Endothelial cell of umbilical vein (primary cell): ENCODE measurements at regions of chr7 and their contacts with region 1.

Region 1: GRCh38 chr7:86975449-86975848 is 84.0 kb downstream of the ELAPOR2 start:
- DNase-seq: no peak
- H3K4me3 ChIP-seq: no peak overlapping the region
- H3K27ac ChIP-seq: no peak overlapping the region
- H3K4me1 ChIP-seq: no peaks in the 10 kb centered on the region
- H3K27me3 ChIP-seq: no peaks in the 10 kb centered on the region
- CTCF ChIP-seq: no peak
- POLR2A ChIP-seq: no peak

Region 2: DNA sequence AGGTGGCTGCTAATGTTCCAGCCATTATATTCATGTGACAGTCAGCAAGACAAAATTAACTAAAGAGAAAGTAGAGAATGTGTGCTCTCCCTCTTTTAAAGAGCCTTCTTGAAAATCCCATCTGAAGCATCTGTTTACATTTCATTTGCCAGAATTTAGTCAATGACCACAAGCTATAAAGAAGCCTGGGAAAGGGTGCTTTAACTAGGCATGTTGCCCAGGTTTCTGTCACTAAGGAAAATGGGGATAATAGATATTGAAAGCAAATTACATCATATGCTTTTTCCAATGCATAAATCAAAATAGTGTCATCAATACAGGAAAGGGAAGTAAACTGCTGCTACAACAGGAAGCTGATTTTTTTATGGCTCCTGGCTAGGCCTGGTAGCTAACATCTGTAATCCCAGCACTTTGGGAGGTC is 16.3 kb after region 1 on chr7:
- CTCF ChIA-PET with region 1: interaction called, 13 read pairs
- POLR2A ChIA-PET with region 1: no interaction called
- dilution Hi-C with region 1: no loop called
- intact Hi-C with region 1: no loop called
- DNase-seq: peak; percentile 81
- H3K4me3 ChIP-seq: no peak overlapping the region
- H3K27ac ChIP-seq: peak overlapping the region; percentile 33
- H3K4me1 ChIP-seq: peaks cover 9% of the 10 kb centered on the region
- H3K27me3 ChIP-seq: no peaks in the 10 kb centered on the region
- CTCF ChIP-seq: no peak
- POLR2A ChIP-seq: no peak

Region 3: GRCh38 chr7:87021285-87021684 is 45.8 kb after region 1 on chr7:
- CTCF ChIA-PET with region 1: no interaction called
- POLR2A ChIA-PET with region 1: no interaction called
- dilution Hi-C with region 1: no loop called
- intact Hi-C with region 1: no loop called
- DNase-seq: peak; percentile 7
- H3K4me3 ChIP-seq: no peak overlapping the region
- H3K27ac ChIP-seq: no peak overlapping the region
- H3K4me1 ChIP-seq: peaks cover 7% of the 10 kb centered on the region
- H3K27me3 ChIP-seq: no peaks in the 10 kb centered on the region
- CTCF ChIP-seq: no peak
- POLR2A ChIP-seq: no peak

Region 4: GRCh38 chr7:87038993-87039716 is 63.7 kb after region 1 on chr7:
- CTCF ChIA-PET with region 1: no interaction called
- POLR2A ChIA-PET with region 1: no interaction called
- dilution Hi-C with region 1: no loop called
- intact Hi-C with region 1: no loop called
- DNase-seq: peak; percentile 20
- H3K4me3 ChIP-seq: peak overlapping the region; percentile 23 to 79 (median 30)
- H3K27ac ChIP-seq: no peak overlapping the region
- H3K4me1 ChIP-seq: no peaks in the 10 kb centered on the region
- H3K27me3 ChIP-seq: no peaks in the 10 kb centered on the region
- CTCF ChIP-seq: no peak
- POLR2A ChIP-seq: no peak

Region 5: DNA sequence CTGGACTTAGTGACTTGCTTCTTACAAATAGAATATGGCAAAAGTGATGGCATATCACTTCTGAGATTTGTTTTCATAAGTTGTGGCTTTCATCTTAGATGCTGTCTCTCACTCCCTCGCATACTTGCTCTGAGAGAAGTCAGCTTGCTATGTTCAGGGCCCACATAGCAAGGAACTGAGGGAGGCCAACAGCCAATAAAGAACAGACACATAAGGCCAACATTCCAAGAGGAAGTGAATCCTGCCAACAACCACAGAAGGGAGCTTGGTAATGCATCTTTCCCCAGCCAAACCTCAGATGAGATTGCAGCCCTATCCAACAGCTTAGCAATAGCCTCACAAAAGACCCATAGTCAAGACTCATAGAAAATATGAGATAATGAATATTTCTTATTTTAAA is 137.6 kb after region 1 on chr7:
- CTCF ChIA-PET with region 1: no interaction called
- POLR2A ChIA-PET with region 1: no interaction called
- dilution Hi-C with region 1: no loop called
- intact Hi-C with region 1: no loop called
- DNase-seq: no peak
- H3K4me3 ChIP-seq: no peak overlapping the region
- H3K27ac ChIP-seq: no peak overlapping the region
- H3K4me1 ChIP-seq: no peaks in the 10 kb centered on the region
- H3K27me3 ChIP-seq: peaks cover 2 to 8% of the 10 kb centered on the region in 2 experiments
- CTCF ChIP-seq: no peak
- POLR2A ChIP-seq: no peak